Posterior vena cava (tissue), 2 donors: ENCODE measurements at regions of chr17 and their contacts with region 1.

Region 1: GRCh38 chr17:65531263-65532100 is 30.0 kb downstream of the AXIN2 start:
- DNase-seq: peak; percentile 89

Region 2: GRCh38 chr17:65472415-65473309 is 58.8 kb before region 1 on chr17:
- intact Hi-C with region 1: no loop called
- DNase-seq: no peak

Region 3: GRCh38 chr17:65498816-65499215 is 32.7 kb before region 1 on chr17:
- intact Hi-C with region 1: loop called in 1 of 2 experiments (anchors 1 kb)
- DNase-seq: no peak

Region 4: GRCh38 chr17:65576939-65577338 is 45.5 kb after region 1 on chr17:
- intact Hi-C with region 1: no loop called
- DNase-seq: no peak